ENCODE measurements at regions of chr6 and their contacts with region 1.

Region 1: GRCh38 chr6:36514554-36515456 is 32.5 kb downstream of the STK38 start:
- DNase-seq: no peak
- H3K4me3 ChIP-seq: no peak overlapping the region
- H3K27ac ChIP-seq: no peak overlapping the region
- H3K4me1 ChIP-seq: peaks cover 5% of the 10 kb centered on the region; the same call in 1 of the 2 replicates
- H3K27me3 ChIP-seq: no peaks in the 10 kb centered on the region
- CTCF ChIP-seq: no peak

Region 2: DNA sequence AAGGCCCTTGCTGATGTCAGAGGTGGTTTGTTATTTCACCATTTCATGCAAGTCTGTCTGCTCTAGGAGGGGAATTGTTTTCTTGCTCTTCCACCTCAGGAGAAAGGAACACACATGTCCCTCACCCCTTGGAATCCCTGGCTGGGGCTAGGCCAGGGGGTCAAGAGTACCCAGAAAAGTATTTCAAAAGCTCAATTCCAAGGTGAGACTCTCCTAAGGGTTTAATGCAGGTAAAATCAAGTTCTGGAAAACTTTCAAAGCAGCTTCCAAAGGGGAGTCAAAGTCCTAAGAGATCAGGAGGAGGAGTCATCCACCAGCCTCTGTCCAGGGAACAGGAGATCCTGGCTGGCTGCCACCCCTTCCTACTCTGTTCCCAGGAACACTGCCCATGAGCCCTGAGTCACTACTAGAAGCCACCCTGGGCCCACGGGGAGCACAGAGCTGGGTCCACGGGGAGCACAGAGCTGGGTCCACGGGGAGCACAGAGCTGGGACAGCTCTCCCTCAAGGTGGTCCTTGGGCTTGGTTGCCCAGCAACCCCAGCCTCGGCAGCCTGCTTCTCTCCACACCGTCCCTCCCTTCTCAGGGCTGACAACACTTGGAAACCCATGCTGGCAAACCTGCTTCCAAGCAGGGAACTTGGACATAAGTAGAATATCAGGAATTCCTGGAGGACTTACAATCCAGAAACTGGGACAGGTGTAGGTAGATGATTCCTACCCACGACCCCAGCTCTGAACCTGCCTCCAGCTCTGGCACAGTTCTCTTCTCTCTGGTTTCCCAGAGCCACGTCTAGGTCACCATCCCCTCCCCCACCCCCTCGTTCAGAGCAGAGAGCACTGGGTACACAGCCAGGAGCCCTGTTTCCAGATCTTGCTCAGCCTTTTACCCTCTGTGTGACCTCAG is 128.4 kb after region 1 on chr6:
- CTCF ChIA-PET with region 1: no interaction called
- POLR2A ChIA-PET with region 1: interaction called, 15 read pairs
- intact Hi-C with region 1: no loop called
- DNase-seq: peak; percentile 47 to 56
- H3K4me3 ChIP-seq: no peak overlapping the region
- H3K27ac ChIP-seq: peak overlapping the region; percentile 45
- H3K4me1 ChIP-seq: peaks cover 30% of the 10 kb centered on the region
- H3K27me3 ChIP-seq: no peaks in the 10 kb centered on the region
- CTCF ChIP-seq: no peak

Region 3: DNA sequence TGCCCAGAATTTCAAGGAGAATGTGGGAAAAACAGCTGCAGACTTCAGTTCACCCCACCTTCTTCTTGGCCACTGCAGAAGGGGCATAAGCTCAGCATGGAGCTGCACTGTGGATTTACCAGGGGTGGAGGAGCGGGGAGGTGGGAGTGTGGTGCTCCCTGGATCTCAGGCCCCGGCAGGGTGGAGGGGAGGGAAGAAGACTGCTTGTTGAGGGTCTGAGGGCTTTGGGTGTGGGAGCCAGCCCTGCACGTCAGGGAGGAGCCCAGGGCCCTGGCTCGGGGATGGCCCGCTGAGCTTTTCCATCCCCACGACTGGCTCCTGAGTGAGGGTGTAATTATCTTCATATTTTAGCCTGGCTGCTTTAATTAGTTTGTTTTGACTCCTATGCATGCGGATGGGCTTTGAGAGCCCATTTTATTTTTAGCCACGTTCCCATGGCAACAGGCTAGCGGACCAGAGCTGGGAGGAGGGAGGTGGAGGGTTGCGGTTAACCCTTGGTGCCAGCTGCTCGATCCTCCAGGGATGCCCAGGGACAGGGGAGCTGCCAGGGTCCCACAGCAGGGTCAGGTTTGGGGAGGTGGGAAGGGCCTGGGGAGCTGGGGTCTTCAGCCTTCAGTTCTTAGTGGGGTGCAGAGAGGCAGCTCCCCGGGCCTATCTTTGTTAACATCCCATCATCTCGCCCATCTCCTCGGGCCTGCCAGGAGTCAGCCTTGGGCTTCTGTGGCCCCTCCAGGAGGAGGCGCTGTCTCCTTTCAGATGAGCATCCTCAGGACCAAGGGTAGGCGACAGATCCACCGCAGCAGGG is 251.0 kb after region 1 on chr6:
- CTCF ChIA-PET with region 1: interaction called, 12 read pairs
- POLR2A ChIA-PET with region 1: no interaction called
- intact Hi-C with region 1: no loop called
- DNase-seq: peak; percentile 50 to 78
- H3K4me3 ChIP-seq: no peak overlapping the region
- H3K27ac ChIP-seq: no peak overlapping the region
- H3K4me1 ChIP-seq: peaks cover 24% of the 10 kb centered on the region
- H3K27me3 ChIP-seq: no peaks in the 10 kb centered on the region
- CTCF ChIP-seq: peak; percentile 92

Region 4: GRCh38 chr6:37762806-37763205 is 1248.0 kb after region 1 on chr6:
- CTCF ChIA-PET with region 1: no interaction called
- POLR2A ChIA-PET with region 1: no interaction called
- intact Hi-C with region 1: no loop called
- DNase-seq: no peak
- H3K4me3 ChIP-seq: no peak overlapping the region
- H3K27ac ChIP-seq: no peak overlapping the region
- H3K4me1 ChIP-seq: no peaks in the 10 kb centered on the region
- H3K27me3 ChIP-seq: no peaks in the 10 kb centered on the region; the same call in 1 of the 2 replicates
- CTCF ChIP-seq: no peak